ENCODE measurements at regions of chr1 and their contacts with region 1.

Region 1: DNA sequence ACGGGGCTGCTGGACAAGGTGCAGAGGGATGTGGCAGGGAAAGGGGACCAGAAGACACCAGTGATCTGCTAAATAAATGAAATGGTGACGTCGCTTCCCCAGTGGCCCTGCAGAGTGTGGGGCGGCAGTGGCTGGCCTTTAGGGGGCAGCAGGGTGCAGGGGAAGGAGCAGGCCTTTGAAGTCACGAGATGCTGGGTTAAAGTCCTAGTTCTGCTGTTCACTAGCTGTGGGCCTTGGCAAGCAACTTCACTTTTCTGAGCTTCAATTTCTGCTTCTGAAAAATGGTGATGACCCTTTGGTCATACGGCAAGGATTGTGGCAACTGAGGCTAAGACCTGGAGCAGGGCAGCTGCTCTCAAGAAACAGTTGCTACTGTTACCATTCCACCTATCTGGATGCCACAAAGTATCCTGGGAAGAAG is 9.2 kb upstream of the GALE start:
- DNase-seq: peak; percentile 84
- ATAC-seq: peak; percentile 81
- H3K4me3 Mint-ChIP-seq: no peak overlapping the region
- H3K27ac Mint-ChIP-seq: no peak overlapping the region
- H3K4me1 Mint-ChIP-seq: peaks cover 7% of the 10 kb centered on the region
- H3K27me3 Mint-ChIP-seq: no peaks in the 10 kb centered on the region; the same call in 1 of the 2 replicates
- CTCF ChIP-seq: 0 out of 2 replicates have a peak, but pooled peaks have one; percentile 51

Region 2: DNA sequence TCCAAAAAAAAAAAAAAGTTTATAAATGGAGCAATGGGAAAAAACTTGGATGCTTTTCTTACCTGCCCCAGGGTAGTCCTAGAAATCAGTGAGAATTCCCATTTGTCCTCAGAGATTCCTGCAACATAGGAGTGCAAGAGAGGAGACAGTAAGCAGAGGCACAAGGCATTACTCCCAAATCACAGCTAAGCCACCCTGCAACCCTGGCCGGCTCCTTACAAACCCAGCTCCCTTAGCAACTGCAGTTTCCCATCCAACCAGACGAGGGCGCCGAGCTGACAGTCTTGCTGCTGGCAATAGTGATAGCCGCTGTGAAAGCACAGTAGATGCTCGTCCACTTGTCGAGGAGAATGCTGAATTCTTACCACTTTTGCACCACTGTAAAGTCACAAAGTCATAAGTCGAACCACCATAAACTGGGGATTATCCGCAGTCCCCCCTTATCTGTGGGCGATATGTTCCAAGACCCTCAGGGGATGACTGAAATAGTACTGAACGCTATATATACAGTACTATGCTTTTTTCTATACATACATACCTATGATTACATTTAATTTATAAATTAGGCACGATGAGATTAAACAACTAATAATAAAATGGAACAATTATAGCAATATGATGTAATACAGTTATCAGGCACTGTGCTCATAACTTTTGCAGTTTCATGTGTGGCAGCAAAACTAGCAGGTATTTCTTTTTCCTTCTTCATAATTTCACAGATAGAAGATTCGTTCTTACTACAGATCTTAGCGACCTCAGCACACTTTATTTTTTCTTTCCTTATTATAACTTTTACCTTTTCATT is 37.5 kb before region 1 on chr1:
- CTCF ChIA-PET with region 1: interaction called, 22 read pairs
- POLR2A ChIA-PET with region 1: no interaction called
- DNase-seq: peak; percentile 92
- ATAC-seq: peak; percentile 97
- H3K4me3 Mint-ChIP-seq: no peak overlapping the region
- H3K27ac Mint-ChIP-seq: no peak overlapping the region
- H3K4me1 Mint-ChIP-seq: peaks cover 4% of the 10 kb centered on the region; the same call in 1 of the 2 replicates
- H3K27me3 Mint-ChIP-seq: no peaks in the 10 kb centered on the region
- CTCF ChIP-seq: peak; percentile 87

Region 3: DNA sequence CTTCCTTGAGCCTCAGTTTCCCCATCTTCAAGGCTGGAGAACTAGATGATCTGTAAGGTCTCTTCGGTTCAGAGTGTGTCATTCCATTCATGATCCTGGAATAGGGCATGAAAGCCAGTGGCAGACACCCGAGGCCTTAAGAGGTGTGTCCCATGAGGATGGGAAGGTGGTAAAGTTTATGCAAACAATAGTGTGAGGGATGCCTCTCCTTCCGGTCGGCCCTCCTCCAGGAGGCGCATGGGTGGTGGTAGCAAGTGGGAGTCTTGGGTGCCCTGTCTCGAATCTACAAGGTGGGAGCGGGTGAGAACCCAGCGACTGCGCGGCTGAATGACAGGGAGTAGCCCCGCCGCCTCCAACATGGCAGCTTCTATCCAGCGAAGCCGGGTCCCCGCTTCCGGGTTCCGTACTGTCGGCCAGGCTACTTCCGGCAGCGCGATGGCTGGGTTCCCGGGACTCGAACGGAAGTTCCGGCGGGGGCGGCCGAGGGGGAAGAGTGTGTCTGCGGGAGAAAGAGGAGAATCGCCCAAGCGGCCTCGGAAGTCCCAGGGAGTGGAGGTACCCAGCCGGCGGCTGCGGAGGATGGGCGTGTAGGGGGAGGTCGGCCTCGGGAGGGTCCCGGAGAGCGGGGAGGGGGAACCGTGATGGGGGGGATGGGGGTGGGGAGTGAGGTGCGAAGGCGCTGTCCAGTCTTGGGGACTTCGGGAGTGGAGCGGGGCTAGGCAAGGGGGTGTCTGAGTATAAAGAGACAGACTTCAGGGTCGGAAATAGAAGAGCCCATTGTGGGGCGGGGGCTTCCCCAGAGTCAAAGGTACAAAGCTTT is 18.9 kb before region 1 on chr1 and contains the start of gene LYPLA2:
- CTCF ChIA-PET with region 1: interaction called, 109 read pairs
- POLR2A ChIA-PET with region 1: no interaction called
- DNase-seq: peak; percentile 90
- ATAC-seq: peak; percentile 87
- H3K4me3 Mint-ChIP-seq: peak within 1 kb of the TSS; percentile 94
- H3K27ac Mint-ChIP-seq: peak within 1 kb of the TSS; percentile 78
- H3K4me1 Mint-ChIP-seq: peaks cover 15% of the 10 kb centered on the region
- H3K27me3 Mint-ChIP-seq: no peaks in the 10 kb centered on the region
- CTCF ChIP-seq: no peak
- total RNA-seq, gene LYPLA2: 131 to 164 TPM (median 134 TPM) in 3 replicates

Region 4: GRCh38 chr1:23838401-23838866 is 28.7 kb after region 1 on chr1:
- CTCF ChIA-PET with region 1: interaction called, 10 read pairs
- POLR2A ChIA-PET with region 1: no interaction called
- DNase-seq: peak; percentile 58
- ATAC-seq: peak; percentile 99
- H3K4me3 Mint-ChIP-seq: peak overlapping the region; percentile 73
- H3K27ac Mint-ChIP-seq: no peak overlapping the region
- H3K4me1 Mint-ChIP-seq: peaks cover 8% of the 10 kb centered on the region
- H3K27me3 Mint-ChIP-seq: peaks cover 35% of the 10 kb centered on the region
- CTCF ChIP-seq: no peak

Region 5: GRCh38 chr1:23867953-23868556 is 58.3 kb after region 1 on chr1 and contains the start of gene FUCA1:
- CTCF ChIA-PET with region 1: interaction called, 47 read pairs
- POLR2A ChIA-PET with region 1: no interaction called
- DNase-seq: peak; percentile 98
- ATAC-seq: peak; percentile 99
- H3K4me3 Mint-ChIP-seq: peak within 1 kb of the TSS; percentile 71
- H3K27ac Mint-ChIP-seq: no peak within 1 kb of the TSS
- H3K4me1 Mint-ChIP-seq: peaks cover 14% of the 10 kb centered on the region
- H3K27me3 Mint-ChIP-seq: peaks cover 50% of the 10 kb centered on the region
- CTCF ChIP-seq: peak; percentile 88
- total RNA-seq, gene FUCA1: 7.5 to 8.3 TPM (median 7.8 TPM) in 3 replicates

Region 6: DNA sequence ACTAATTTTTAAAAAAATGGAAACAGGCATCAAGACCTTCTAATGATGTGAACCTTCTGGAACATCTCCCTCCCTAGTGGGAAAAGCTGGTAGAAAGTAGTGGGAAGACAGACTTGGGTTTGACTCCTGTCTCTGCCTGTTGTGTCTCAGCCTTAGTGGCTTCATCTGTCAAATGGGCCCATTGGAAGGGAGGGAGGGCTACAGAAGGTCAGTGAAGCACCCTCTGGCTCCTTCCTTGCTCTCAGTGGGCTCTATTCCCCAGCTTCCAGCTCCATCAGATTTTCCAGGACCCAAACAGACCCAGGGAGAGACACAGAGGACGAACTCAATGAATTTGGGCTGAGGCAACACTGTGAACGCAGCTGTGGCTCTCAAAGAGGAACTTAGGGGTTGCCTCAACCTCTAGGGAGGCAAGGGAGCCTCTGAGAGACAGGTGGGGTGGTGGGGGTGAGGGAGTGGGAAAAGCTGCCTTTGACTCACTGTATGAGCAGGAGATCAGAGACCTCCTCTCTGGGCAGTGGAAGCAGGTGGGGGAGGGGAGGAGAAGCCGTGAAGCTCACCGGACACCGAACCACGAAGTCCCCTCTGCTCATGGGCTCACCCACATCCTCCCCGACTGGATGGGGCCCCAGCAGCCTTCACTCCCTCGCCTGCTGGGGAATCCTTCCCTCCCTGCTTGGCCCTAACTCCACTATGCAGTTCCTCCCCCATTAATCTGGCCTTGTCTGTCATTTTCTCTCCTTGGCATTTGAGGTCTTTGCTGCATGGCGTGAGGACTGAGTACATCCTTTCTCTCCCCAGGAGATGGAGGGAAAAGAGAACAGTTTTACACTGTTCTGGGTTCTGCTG is 99.0 kb after region 1 on chr1:
- CTCF ChIA-PET with region 1: interaction called, 44 read pairs
- POLR2A ChIA-PET with region 1: no interaction called
- DNase-seq: no peak
- ATAC-seq: no peak
- H3K4me3 Mint-ChIP-seq: no peak overlapping the region
- H3K27ac Mint-ChIP-seq: no peak overlapping the region
- H3K4me1 Mint-ChIP-seq: peaks cover 20% of the 10 kb centered on the region
- H3K27me3 Mint-ChIP-seq: peaks cover 24% of the 10 kb centered on the region
- CTCF ChIP-seq: no peak

Region 7: DNA sequence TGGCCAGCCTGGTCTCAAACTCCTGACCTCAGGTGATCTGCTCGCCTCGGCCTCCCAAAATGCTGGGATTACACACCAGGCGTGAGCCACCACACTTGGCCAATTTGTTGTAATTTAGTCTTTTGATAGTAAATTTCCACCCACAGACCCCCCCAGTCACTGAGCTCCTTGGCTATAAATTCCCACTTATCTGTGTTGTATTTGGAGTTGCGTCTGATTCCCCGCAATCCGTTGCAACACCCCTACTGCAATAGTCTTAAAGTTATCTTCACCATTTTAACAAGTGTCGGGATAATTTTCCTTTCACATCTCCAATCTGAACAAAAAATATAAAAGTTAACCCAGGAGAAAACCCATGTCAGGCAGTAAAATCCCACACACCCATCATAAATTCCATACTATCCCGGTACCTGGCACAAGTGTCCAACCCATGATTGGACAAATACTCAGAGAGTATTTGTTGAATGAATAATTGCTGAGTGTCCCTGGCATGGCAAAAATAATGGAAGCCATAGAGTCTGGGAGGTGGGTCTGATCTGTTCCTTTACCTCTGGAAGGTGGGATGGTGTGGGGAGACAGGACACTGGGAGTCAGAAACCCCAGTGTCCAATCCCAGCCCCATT is 112.7 kb after region 1 on chr1:
- CTCF ChIA-PET with region 1: interaction called, 98 read pairs
- POLR2A ChIA-PET with region 1: no interaction called
- DNase-seq: no peak
- ATAC-seq: no peak
- H3K4me3 Mint-ChIP-seq: no peak overlapping the region
- H3K27ac Mint-ChIP-seq: 0 out of 2 replicates have a peak overlapping the region, but pooled peaks have one; percentile 12
- H3K4me1 Mint-ChIP-seq: no peaks in the 10 kb centered on the region; the same call in 1 of the 2 replicates
- H3K27me3 Mint-ChIP-seq: no peaks in the 10 kb centered on the region
- CTCF ChIP-seq: no peak

Measured in WTC11 (cell line).